Naive thymus-derived CD4-positive, alpha-beta T cell (primary cell): ENCODE measurements at regions of chr1 and their contacts with region 1.

Region 1: GRCh38 chr1:167409183-167409582 is 109.1 kb downstream of the CD247 start:
- DNase-seq: peak in 2 of 9 donors; percentile 19 to 25
- ATAC-seq: peak; percentile 45
- H3K4me3 ChIP-seq: no peak overlapping the region
- H3K4me3 Mint-ChIP-seq: no peak overlapping the region
- H3K27ac ChIP-seq: no peak overlapping the region
- H3K27ac Mint-ChIP-seq: peak overlapping the region in 1 of 9 donors; percentile 39
- H3K4me1 ChIP-seq: no peaks in the 10 kb centered on the region
- H3K4me1 Mint-ChIP-seq: peaks cover 0 to 18% (median 6%) of the 10 kb centered on the region in 7 donors
- H3K27me3 ChIP-seq: no peaks in the 10 kb centered on the region
- H3K27me3 Mint-ChIP-seq: no peaks in the 10 kb centered on the region

Region 2: DNA sequence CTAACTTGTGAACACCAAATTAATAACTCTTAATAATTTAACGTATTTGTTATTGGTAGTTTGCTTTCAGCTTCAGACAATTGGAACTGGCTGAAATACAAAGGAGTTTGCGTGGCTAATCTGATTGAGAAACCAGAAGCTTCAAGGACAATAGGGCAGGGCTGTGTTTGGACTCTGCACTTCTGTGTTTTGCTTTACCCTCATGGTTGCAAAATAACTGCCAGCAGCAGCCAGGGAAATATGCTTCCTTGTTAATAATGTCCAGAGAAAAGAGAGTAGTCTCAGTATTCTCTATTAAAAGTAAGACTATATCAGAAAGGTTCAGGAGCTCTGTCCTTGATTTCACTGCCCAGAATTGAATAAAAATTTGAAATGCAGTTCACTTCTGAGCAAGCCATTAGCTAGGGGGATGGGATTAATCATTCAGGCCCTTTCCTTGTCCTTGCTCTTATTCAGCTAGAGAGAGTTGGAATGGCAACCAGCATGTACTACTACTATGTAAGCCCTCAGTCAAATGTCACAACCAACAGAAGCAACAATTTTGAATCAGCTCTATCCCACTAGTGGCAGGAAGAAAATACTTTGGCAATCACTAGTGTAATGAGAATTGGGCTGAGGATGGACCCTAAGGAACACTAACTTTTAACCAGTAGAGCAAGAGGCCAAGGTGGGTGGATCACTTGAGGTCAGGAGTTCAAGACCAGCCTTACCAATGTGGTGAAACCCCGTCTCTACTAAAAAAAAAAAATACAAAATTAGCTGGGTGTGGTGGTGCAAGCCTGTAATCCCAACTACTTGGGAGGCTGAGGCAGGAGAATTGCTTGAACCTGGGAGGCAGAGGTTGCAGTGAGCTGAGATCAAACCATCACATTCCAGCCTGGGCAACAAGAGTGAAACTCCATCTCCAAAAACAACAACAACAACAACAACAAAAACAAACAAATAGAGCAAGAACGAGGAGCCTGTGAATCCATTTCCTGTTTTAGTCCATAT is 111.7 kb before region 1 on chr1:
- CTCF ChIA-PET with region 1: no interaction called
- POLR2A ChIA-PET with region 1: no interaction called
- intact Hi-C with region 1: no loop called
- DNase-seq: no peak
- ATAC-seq: peak; percentile 64
- H3K4me3 ChIP-seq: no peak overlapping the region
- H3K4me3 Mint-ChIP-seq: no peak overlapping the region
- H3K27ac ChIP-seq: no peak overlapping the region
- H3K27ac Mint-ChIP-seq: peak overlapping the region in 2 of 9 donors; percentile 8 to 16
- H3K4me1 ChIP-seq: no peaks in the 10 kb centered on the region
- H3K4me1 Mint-ChIP-seq: peaks cover 2 to 48% (median 23%) of the 10 kb centered on the region in 7 donors
- H3K27me3 ChIP-seq: no peaks in the 10 kb centered on the region
- H3K27me3 Mint-ChIP-seq: no peaks in the 10 kb centered on the region

Region 3: GRCh38 chr1:167430134-167430856 is 21.1 kb after region 1 on chr1:
- CTCF ChIA-PET with region 1: no interaction called
- POLR2A ChIA-PET with region 1: interaction called, 9 read pairs
- intact Hi-C with region 1: loop called in 1 of 2 experiments (anchors 1 kb)
- DNase-seq: no peak
- ATAC-seq: peak; percentile 31
- H3K4me3 ChIP-seq: no peak overlapping the region
- H3K4me3 Mint-ChIP-seq: peak overlapping the region in 4 of 10 donors; percentile 5 to 71 (median 27)
- H3K27ac ChIP-seq: peak overlapping the region; percentile 14
- H3K27ac Mint-ChIP-seq: peak overlapping the region; percentile 65 to 93 (median 79)
- H3K4me1 ChIP-seq: peaks cover 19 to 21% of the 10 kb centered on the region in 2 donors
- H3K4me1 Mint-ChIP-seq: peaks cover 18 to 85% (median 36%) of the 10 kb centered on the region in 7 donors
- H3K27me3 ChIP-seq: no peaks in the 10 kb centered on the region
- H3K27me3 Mint-ChIP-seq: no peaks in the 10 kb centered on the region